MCF 10A (cell line): ENCODE measurements at regions of chr16 and their contacts with region 1.

Region 1: GRCh38 chr16:75703306-75703705 is 2.0 kb upstream of the DUXB start:
- DNase-seq: peak; percentile 16
- H3K4me3 Mint-ChIP-seq: no peak overlapping the region
- H3K27ac Mint-ChIP-seq: no peak overlapping the region
- H3K4me1 Mint-ChIP-seq: peaks cover 5% of the 10 kb centered on the region
- H3K27me3 Mint-ChIP-seq: no peaks in the 10 kb centered on the region
- CTCF ChIP-seq: no peak

Region 2: GRCh38 chr16:75497558-75497957 is 205.7 kb before region 1 on chr16:
- CTCF ChIA-PET with region 1: no interaction called
- POLR2A ChIA-PET with region 1: no interaction called
- intact Hi-C with region 1: no loop called
- DNase-seq: no peak
- H3K4me3 Mint-ChIP-seq: no peak overlapping the region
- H3K27ac Mint-ChIP-seq: no peak overlapping the region
- H3K4me1 Mint-ChIP-seq: peaks cover 11% of the 10 kb centered on the region
- H3K27me3 Mint-ChIP-seq: no peaks in the 10 kb centered on the region
- CTCF ChIP-seq: no peak

Region 3: GRCh38 chr16:75758215-75758614 is 54.9 kb after region 1 on chr16:
- CTCF ChIA-PET with region 1: no interaction called
- POLR2A ChIA-PET with region 1: interaction called, 3 read pairs
- intact Hi-C with region 1: loop called (anchors 10 kb)
- DNase-seq: peak; percentile 10
- H3K4me3 Mint-ChIP-seq: no peak overlapping the region
- H3K27ac Mint-ChIP-seq: no peak overlapping the region
- H3K4me1 Mint-ChIP-seq: peaks cover 10% of the 10 kb centered on the region
- H3K27me3 Mint-ChIP-seq: no peaks in the 10 kb centered on the region
- CTCF ChIP-seq: no peak